Activated T-helper 1 cell treated with anti-CD3 and anti-CD28 coated beads, Interleukin-12 subunit alpha, Interleukin-12 subunit beta, Interleukin-2, Interleukin-4 antibody, amounts not matched to agents 30 ng/mL and 10 ng/mL and 1 ng/mL, durations not matched to agents 14 hours and 24 hours and 36 hours (primary cell): ENCODE measurements at regions of chr2 and their contacts with region 1.

Region 1: DNA sequence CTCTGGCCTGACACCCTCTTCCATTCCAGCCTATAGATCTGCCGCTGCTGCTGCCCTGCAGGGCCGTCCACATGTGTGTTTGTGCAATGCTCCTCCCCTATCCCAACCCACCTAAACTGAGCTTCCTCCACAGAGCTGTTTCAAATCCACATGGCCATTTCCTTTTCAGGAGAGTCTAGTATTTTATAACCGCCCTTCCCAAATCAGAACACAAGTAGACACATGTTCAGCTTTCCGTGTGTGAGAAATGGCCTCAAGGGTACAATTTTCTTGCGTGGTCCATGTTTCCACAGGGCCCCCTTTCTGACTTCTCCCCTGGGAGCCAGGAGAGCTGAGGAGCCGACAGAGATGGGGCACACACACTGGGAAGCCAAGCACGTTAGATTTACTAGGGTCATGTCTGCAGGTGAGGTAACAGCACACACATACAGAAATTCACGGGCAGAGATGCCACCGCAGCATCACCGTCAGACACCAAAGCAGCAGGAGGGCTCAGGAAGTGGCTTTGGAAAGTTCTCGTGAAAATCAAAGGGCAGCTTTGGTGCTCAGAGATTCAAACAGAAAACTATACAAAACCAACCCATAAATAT is 102.9 kb upstream of the TGFA start:
- DNase-seq: no peak
- H3K4me3 Mint-ChIP-seq: no peak overlapping the region
- H3K27ac Mint-ChIP-seq: no peak overlapping the region
- H3K4me1 Mint-ChIP-seq: peaks cover 27% of the 10 kb centered on the region
- H3K27me3 Mint-ChIP-seq: peaks cover 7% of the 10 kb centered on the region

Region 2: DNA sequence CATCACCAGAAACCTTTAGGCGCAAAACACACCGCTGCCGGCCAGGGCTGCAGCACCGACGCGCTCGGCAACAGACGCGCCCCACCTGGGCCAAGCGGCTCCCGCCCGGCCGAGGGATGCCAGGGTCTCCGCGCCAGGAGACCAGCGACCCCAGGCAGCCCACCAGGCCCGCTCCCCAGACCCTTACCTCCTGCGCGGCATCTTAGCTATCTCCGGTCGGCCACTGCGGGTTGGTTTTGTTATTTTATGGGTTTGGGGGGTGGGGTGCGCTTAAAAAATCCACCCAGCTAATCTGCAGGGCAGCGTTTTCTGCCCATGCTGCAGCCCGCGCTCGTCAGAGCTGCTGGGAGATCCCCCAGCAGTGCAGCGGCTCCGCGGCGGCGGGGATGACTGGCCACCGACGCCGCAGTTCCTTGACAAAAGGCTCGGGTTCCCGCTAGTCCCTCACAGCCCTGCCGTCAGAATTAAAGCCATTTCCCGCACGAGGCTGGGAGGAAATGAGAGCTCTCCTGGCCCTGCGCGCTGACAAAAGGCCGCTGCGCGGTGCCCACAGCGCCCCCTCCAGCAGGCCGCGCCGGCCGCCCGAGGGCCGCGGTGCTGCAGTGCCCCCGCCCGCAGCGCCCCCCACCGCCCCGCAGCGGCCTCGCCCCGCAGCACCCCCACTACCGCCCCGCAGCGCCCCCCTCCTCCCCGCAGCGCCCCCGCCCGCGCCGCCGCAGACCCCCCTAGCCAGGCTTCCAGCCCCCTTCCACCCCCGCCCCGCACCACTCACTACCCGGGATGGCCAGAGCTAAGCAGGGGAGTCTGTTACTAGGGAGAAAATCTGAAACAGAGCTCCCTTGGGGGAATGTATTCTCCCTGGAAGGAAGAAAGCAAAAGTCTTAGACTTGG is 111.4 kb after region 1 on chr2 and contains the start of gene ADD2:
- intact Hi-C with region 1: loop called (anchors 5 kb)
- DNase-seq: peak; percentile 48
- H3K4me3 Mint-ChIP-seq: peak within 1 kb of the TSS; percentile 89
- H3K27ac Mint-ChIP-seq: peak within 1 kb of the TSS; percentile 76
- H3K4me1 Mint-ChIP-seq: peaks cover 26% of the 10 kb centered on the region
- H3K27me3 Mint-ChIP-seq: peaks cover 37% of the 10 kb centered on the region
- total RNA-seq, gene ADD2: 6.9 and 9.0 TPM in 2 replicates

Region 3: DNA sequence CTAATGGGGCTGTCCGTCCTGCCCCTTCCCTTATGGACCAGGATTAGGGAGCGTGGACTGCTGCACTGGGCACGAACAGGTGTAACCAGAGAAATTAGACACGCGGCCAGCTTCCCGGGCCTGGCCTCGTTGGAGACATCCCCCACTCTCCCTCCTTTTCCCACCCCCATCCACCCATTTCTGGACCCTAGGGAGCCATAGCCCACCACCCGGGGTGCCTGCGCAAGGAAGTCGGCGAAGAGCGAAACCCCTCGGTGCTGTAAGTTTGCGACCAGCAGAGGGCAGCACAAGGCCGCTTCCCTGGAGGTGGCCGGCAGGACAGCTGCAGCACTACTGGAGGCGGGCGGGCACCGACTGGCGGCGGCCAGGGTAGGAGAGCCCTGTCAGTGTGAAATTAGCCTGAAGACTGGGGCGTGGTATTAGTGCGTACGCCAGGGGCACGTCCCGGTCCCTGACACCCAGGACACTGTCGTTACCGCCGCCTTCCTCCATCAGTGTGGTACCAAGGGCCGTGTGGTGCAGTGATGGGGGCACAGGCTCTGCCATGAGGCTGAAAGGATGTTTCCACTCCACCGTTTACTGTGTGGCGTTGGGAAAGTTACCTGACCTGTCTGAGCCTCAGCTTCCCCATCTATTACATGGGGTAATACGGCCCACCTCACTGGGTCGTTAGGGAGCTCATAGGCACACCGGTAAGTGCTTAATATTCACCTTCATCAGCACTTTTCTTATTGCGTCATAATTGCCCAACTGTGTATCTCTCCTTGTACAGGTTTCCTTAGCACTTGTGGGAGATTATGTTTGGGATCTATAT is 215.1 kb after region 1 on chr2:
- intact Hi-C with region 1: loop called (anchors 10 kb)
- DNase-seq: peak; percentile 72
- H3K4me3 Mint-ChIP-seq: peak overlapping the region; percentile 15
- H3K27ac Mint-ChIP-seq: no peak overlapping the region
- H3K4me1 Mint-ChIP-seq: peaks cover 7% of the 10 kb centered on the region
- H3K27me3 Mint-ChIP-seq: peaks cover 10% of the 10 kb centered on the region

Region 4: GRCh38 chr2:70948337-70949003 is 292.0 kb after region 1 on chr2:
- intact Hi-C with region 1: loop called (anchors 1 kb)
- DNase-seq: peak; percentile 67
- H3K4me3 Mint-ChIP-seq: peak overlapping the region; percentile 81
- H3K27ac Mint-ChIP-seq: no peak overlapping the region
- H3K4me1 Mint-ChIP-seq: peaks cover 16% of the 10 kb centered on the region
- H3K27me3 Mint-ChIP-seq: peaks cover 32% of the 10 kb centered on the region